Mammary epithelial cell (primary cell): ENCODE measurements at regions of chr10 and their contacts with region 1.

Region 1: GRCh38 chr10:94402015-94402842 is at the start of gene TBC1D12:
- DNase-seq: peak; percentile 95
- H3K4me3 ChIP-seq: peak within 1 kb of the TSS; percentile 86 to 92 (median 90)
- H3K27ac ChIP-seq: peak within 1 kb of the TSS; percentile 74
- H3K4me1 ChIP-seq: peaks cover 10% of the 10 kb centered on the region
- H3K27me3 ChIP-seq: no peaks in the 10 kb centered on the region
- CTCF ChIP-seq: no peak
- total RNA-seq, gene TBC1D12: 7.4 to 15.7 TPM

Region 2: DNA sequence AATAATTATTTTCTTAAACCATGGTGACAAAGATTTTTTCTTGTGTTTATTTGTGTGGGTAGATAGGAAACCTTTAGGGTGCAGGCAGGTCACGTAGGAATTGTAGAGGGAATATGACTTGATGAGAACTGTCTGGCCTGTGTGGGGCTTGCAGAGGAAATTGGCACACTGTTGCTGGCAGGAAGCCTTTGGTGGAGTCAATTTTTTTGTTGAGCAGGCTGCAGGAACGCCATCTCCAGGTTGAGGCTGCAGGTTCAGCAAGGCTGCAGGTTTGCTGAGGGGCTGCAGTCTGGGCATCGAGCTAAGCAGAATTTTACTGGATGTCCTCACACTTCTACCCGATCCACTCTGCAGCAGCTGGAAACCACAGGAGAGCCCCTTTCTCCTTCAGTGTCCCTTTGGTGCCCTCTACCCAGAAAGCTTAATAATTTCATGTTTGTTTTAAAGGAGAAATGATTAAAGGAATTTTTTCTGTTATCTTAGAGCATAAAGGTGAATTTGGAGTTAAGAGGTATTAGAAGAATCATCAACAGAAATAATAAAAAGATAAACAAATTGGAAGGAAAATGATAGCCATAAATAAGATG is 37.1 kb after region 1 on chr10:
- CTCF ChIA-PET with region 1: interaction called, 19 read pairs
- dilution Hi-C with region 1: no loop called
- in situ Hi-C with region 1: no loop called
- intact Hi-C with region 1: loop called (anchors 5 kb)
- DNase-seq: peak; percentile 3
- H3K4me3 ChIP-seq: no peak overlapping the region
- H3K27ac ChIP-seq: no peak overlapping the region
- H3K4me1 ChIP-seq: no peaks in the 10 kb centered on the region
- H3K27me3 ChIP-seq: no peaks in the 10 kb centered on the region
- CTCF ChIP-seq: peak in 1 of 2 donors; percentile 7

Region 3: DNA sequence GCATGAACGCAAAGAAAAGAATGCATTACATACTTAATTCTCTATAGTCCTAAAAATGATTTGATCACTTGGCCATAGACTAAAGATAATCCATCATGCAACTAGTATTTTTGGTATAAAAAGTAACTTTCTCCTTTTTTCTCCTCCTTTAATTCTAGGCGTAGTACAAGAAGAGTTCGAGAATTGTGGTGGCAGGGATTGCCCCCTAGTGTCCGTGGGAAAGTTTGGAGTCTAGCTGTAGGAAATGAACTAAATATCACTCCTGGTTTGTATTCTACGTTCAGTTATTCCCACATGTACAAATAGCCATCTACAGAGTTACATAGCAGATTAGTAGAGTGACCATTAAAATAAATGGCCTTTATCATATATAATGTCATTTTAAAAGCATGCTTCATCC is 97.8 kb after region 1 on chr10:
- CTCF ChIA-PET with region 1: no interaction called
- dilution Hi-C with region 1: no loop called
- in situ Hi-C with region 1: no loop called
- intact Hi-C with region 1: no loop called
- DNase-seq: no peak
- H3K4me3 ChIP-seq: no peak overlapping the region
- H3K27ac ChIP-seq: no peak overlapping the region
- H3K4me1 ChIP-seq: no peaks in the 10 kb centered on the region
- H3K27me3 ChIP-seq: no peaks in the 10 kb centered on the region
- CTCF ChIP-seq: peak; percentile 18 to 19

Region 4: GRCh38 chr10:94545391-94546048 is 143.3 kb after region 1 on chr10 and contains the start of gene HELLS:
- CTCF ChIA-PET with region 1: no interaction called
- dilution Hi-C with region 1: no loop called
- in situ Hi-C with region 1: no loop called
- intact Hi-C with region 1: loop called (anchors 10 kb)
- DNase-seq: peak; percentile 85
- H3K4me3 ChIP-seq: peak within 1 kb of the TSS; percentile 75 to 88 (median 85)
- H3K27ac ChIP-seq: peak within 1 kb of the TSS; percentile 76
- H3K4me1 ChIP-seq: peaks cover 12% of the 10 kb centered on the region
- H3K27me3 ChIP-seq: no peaks in the 10 kb centered on the region
- CTCF ChIP-seq: no peak
- total RNA-seq, gene HELLS: 11.5 to 70.3 TPM